PC-3 (cell line): ENCODE measurements at regions of chr1 and their contacts with region 1.

Region 1: DNA sequence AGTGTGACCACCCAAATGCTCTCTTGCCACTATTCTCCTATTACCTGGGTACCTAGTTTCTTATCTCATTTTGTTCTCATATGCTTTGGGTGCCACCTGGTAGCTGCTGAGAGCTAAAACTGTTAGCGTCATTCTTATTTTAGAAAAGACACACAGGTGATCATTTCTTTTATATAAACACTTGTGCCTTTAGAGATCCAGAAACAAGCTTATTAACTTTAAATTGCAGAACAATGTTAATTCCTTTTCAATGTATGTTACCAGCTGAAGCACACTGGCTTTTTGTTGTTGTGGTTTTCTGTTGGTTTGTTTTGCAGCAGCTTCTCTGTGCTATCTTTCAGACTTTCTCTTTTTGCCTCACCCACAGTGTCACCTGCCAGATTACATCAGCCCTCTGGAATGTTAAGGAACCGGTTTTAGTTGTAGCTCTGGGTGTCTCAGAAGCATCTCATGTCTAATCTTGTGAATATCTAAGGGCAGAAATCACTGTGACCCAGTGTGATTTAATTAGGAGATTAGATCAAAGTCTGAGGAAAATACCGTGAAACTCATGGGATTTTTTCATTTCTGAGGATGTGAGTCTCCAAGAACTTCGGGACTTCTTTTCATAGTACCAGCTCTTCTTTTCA is 43.4 kb upstream of the SLC19A2 start:
- DNase-seq: peak; percentile 100
- ATAC-seq: peak; percentile 91
- H3K4me3 ChIP-seq: peak overlapping the region; percentile 47
- H3K27ac ChIP-seq: peak overlapping the region; percentile 26
- H3K4me1 ChIP-seq: peaks cover 45% of the 10 kb centered on the region
- H3K27me3 ChIP-seq: no peaks in the 10 kb centered on the region
- CTCF ChIP-seq: no peak

Region 2: GRCh38 chr1:168628807-168629206 is 900.4 kb before region 1 on chr1:
- CTCF ChIA-PET with region 1: no interaction called
- POLR2A ChIA-PET with region 1: interaction called, 3 read pairs
- intact Hi-C with region 1: loop called (anchors 2 kb)
- DNase-seq: peak; percentile 98
- ATAC-seq: peak; percentile 97
- H3K4me3 ChIP-seq: peak overlapping the region; percentile 6; the same call in 1 of the 2 replicates
- H3K27ac ChIP-seq: peak overlapping the region; percentile 84
- H3K4me1 ChIP-seq: peaks cover 34% of the 10 kb centered on the region
- H3K27me3 ChIP-seq: no peaks in the 10 kb centered on the region
- CTCF ChIP-seq: no peak

Region 3: GRCh38 chr1:169367486-169368405 is 161.4 kb before region 1 on chr1 and contains the starts of genes BLZF1 and NME7:
- CTCF ChIA-PET with region 1: no interaction called
- POLR2A ChIA-PET with region 1: no interaction called
- intact Hi-C with region 1: loop called (anchors 5 kb)
- DNase-seq: peak; percentile 100
- ATAC-seq: peak; percentile 90
- H3K4me3 ChIP-seq: peak within 1 kb of the TSS; percentile 92
- H3K27ac ChIP-seq: peak within 1 kb of the TSS; percentile 87
- H3K4me1 ChIP-seq: peaks cover 46% of the 10 kb centered on the region
- H3K27me3 ChIP-seq: no peaks in the 10 kb centered on the region
- CTCF ChIP-seq: no peak
- total RNA-seq, gene BLZF1: 30.6 and 37.4 TPM in 2 replicates
- total RNA-seq, gene NME7: 18.6 and 18.9 TPM in 2 replicates

Region 4: GRCh38 chr1:169514566-169515270 is 14.5 kb before region 1 on chr1:
- CTCF ChIA-PET with region 1: no interaction called
- POLR2A ChIA-PET with region 1: interaction called, 5 read pairs
- intact Hi-C with region 1: loop called (anchors 1 kb)
- DNase-seq: peak; percentile 32
- ATAC-seq: peak; percentile 44
- H3K4me3 ChIP-seq: no peak overlapping the region
- H3K27ac ChIP-seq: 0 out of 2 replicates have a peak overlapping the region, but pooled peaks have one; percentile 2
- H3K4me1 ChIP-seq: peaks cover 58% of the 10 kb centered on the region
- H3K27me3 ChIP-seq: no peaks in the 10 kb centered on the region
- CTCF ChIP-seq: no peak

Region 5: GRCh38 chr1:169538998-169539871 is 10.1 kb after region 1 on chr1:
- CTCF ChIA-PET with region 1: no interaction called
- POLR2A ChIA-PET with region 1: interaction called, 5 read pairs
- intact Hi-C with region 1: loop called (anchors 1 kb)
- DNase-seq: peak; percentile 99
- ATAC-seq: peak; percentile 100
- H3K4me3 ChIP-seq: no peak overlapping the region
- H3K27ac ChIP-seq: peak overlapping the region; percentile 15
- H3K4me1 ChIP-seq: peaks cover 15% of the 10 kb centered on the region
- H3K27me3 ChIP-seq: no peaks in the 10 kb centered on the region
- CTCF ChIP-seq: no peak